ENCODE measurements at regions of chr14 and their contacts with region 1.

Region 1: GRCh38 chr14:73458151-73458976 is at the start of gene NUMB:
- DNase-seq: peak; percentile 95 to 98 (median 96)
- ATAC-seq: peak; percentile 93
- H3K4me3 ChIP-seq: peak within 1 kb of the TSS; percentile 89
- H3K27ac ChIP-seq: peak within 1 kb of the TSS; percentile 88
- H3K4me1 ChIP-seq: peaks cover 25 to 41% of the 10 kb centered on the region in 2 experiments
- H3K27me3 ChIP-seq: no peaks in the 10 kb centered on the region
- CTCF ChIP-seq: 0 out of 6 replicates have a peak, but pooled peaks of 2 of the 3 experiments have one; percentile 1 to 4
- EP300 ChIP-seq: no peak; the same call in 1 of the 2 replicates
- POLR2A ChIP-seq: peak; percentile 82
- RAD21 ChIP-seq: no peak
- polyA plus RNA-seq, gene NUMB: 23.5 to 47.8 TPM

Region 2: GRCh38 chr14:73026845-73027542 is 431.4 kb before region 1 on chr14 and contains the start of gene ZFYVE1:
- CTCF ChIA-PET with region 1: no interaction called
- POLR2A ChIA-PET with region 1: no interaction called
- in situ Hi-C with region 1: loop called (anchors 25 kb)
- intact Hi-C with region 1: no loop called
- DNase-seq: peak; percentile 85 to 96 (median 88)
- ATAC-seq: peak; percentile 99
- H3K4me3 ChIP-seq: peak within 1 kb of the TSS; percentile 68
- H3K27ac ChIP-seq: peak within 1 kb of the TSS; percentile 69
- H3K4me1 ChIP-seq: peaks cover 0 to 5% of the 10 kb centered on the region in 2 experiments; a peak in 3 of 5 replicates
- H3K27me3 ChIP-seq: no peaks in the 10 kb centered on the region
- CTCF ChIP-seq: no peak
- EP300 ChIP-seq: peak; percentile 31; the same call in 1 of the 2 replicates
- POLR2A ChIP-seq: peak; percentile 67
- RAD21 ChIP-seq: no peak
- polyA plus RNA-seq, gene ZFYVE1: 0.62 to 1.1 TPM